ENCODE measurements at regions of chr3 and their contacts with region 1.

Region 1: DNA sequence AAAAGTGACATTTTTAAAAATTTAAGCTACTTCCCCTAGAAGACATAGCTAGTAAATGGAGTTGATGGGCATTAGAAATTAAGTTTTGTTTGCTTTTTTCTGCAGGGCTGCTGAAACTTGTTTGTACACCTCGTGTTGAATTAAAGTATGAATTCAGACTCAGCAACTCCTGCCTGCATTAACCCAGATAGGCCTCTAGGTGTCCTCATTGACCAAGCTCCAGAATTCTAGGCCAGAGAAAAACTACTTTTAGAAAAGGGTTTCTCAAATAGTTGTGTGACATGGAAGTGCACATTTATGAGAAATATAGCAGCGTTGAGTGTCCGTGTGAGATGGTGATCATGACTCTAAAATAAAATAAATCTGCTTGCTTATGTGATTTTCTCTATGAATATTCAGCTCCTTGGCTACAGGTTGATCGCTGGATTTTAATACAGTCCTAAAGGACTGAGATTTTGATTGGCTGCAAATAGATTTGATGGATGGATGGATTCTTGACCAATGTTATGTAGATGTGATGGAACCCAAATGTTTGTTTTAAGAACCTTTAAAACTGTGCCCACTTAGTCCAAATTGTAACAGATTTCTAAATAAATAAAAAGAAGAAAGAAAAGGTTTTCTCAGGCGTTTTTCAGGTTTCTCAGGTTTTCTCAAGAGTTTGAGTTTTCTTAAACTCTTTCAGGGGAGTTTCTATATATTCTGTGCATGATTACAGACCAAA is 39.4 kb upstream of the LMOD3 start:
- DNase-seq: peak in 7 of 9 experiments; percentile 4 to 68 (median 20)
- ATAC-seq: peak; percentile 83
- H3K4me3 ChIP-seq: no peak overlapping the region
- H3K4me3 Mint-ChIP-seq: no peak overlapping the region
- H3K27ac ChIP-seq: no peak overlapping the region
- H3K27ac Mint-ChIP-seq: no peak overlapping the region
- H3K4me1 ChIP-seq: no peaks in the 10 kb centered on the region
- H3K4me1 Mint-ChIP-seq: no peaks in the 10 kb centered on the region
- H3K27me3 ChIP-seq: no peaks in the 10 kb centered on the region
- H3K27me3 Mint-ChIP-seq: peaks cover 5% of the 10 kb centered on the region
- CTCF ChIP-seq: peak; percentile 99

Region 2: GRCh38 chr3:69174871-69175737 is 13.4 kb after region 1 on chr3:
- CTCF ChIA-PET with region 1: interaction called, 18 read pairs
- POLR2A ChIA-PET with region 1: no interaction called
- intact Hi-C with region 1: no loop called
- DNase-seq: no peak
- ATAC-seq: no peak
- H3K4me3 ChIP-seq: no peak overlapping the region
- H3K4me3 Mint-ChIP-seq: no peak overlapping the region
- H3K27ac ChIP-seq: no peak overlapping the region
- H3K27ac Mint-ChIP-seq: no peak overlapping the region
- H3K4me1 ChIP-seq: no peaks in the 10 kb centered on the region
- H3K4me1 Mint-ChIP-seq: peaks cover 5% of the 10 kb centered on the region
- H3K27me3 ChIP-seq: no peaks in the 10 kb centered on the region
- H3K27me3 Mint-ChIP-seq: no peaks in the 10 kb centered on the region
- CTCF ChIP-seq: no peak

Region 3: DNA sequence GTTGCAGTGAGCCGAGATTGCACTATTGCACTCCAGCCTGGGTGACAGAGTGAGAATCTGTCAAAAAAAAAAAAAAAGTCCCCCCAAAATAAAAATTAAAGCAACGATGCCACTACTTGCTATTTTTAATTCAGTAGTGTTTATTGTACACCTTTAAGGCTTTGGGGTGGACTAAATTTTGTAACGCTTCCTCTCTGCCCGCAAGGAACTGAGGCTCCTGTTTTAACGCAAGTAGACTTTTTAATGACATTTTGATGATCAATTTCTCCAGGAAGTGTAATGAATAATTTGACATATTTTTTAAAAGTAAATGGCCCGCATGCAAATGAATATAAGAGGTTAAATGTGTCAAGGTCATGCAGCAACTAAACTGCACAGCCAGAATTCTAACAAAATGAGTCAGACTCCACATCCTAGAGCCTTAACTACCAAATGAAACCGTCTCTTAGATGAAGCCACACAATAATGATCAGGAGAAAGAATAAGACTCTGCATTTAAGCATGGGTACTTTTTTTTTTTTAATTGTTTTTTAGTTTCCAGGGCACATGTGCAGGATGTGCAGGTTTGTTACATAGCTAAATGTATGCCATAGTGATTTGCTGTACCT is 57.5 kb after region 1 on chr3:
- CTCF ChIA-PET with region 1: no interaction called
- POLR2A ChIA-PET with region 1: no interaction called
- intact Hi-C with region 1: no loop called
- DNase-seq: no peak
- ATAC-seq: no peak
- H3K4me3 ChIP-seq: no peak overlapping the region
- H3K4me3 Mint-ChIP-seq: no peak overlapping the region
- H3K27ac ChIP-seq: no peak overlapping the region
- H3K27ac Mint-ChIP-seq: no peak overlapping the region
- H3K4me1 ChIP-seq: no peaks in the 10 kb centered on the region
- H3K4me1 Mint-ChIP-seq: no peaks in the 10 kb centered on the region
- H3K27me3 ChIP-seq: no peaks in the 10 kb centered on the region
- H3K27me3 Mint-ChIP-seq: no peaks in the 10 kb centered on the region
- CTCF ChIP-seq: no peak

Region 4: DNA sequence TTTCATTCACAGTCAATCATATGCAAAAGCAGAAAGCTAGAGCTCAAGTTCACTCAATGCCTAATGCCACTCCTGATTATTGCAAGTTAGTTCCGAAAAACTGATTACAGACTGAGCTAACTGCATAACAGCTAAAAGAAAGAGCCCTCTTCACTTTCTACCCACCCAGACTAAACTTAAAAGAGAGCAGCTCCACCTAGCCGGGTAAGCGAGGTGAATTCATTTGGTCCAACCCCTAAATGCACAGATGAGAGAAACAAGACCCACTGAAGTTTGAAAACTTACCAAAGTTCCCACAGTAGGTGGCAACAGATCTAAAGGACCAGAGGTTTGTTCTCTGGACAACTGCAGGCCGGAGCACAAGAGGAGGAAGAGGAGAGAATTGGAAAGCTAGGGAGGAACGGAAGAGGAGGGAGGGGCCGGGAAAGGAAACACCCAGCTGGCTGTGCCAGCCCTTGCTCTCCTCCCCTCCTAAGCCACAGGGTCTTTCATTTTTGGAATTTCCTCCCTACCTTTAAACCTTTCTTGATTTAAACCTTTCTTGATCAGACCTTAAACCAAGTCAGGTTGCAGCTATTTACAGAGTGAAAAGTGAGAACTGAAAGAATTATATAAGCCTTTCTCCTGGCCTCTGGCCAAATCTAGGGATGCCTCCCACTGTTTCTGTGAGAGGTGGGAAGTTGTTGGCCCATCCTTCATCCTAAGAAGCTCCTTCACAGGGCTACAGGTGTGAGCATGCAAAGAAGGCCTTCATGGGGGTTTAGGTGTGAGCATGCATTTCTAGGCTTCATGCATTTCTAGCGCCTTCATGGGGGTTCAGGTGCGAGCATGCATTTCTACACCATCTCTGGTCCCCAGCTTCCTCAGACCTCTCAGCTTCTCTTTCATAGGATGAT is 75.3 kb after region 1 on chr3:
- CTCF ChIA-PET with region 1: interaction called, 20 read pairs
- POLR2A ChIA-PET with region 1: no interaction called
- intact Hi-C with region 1: loop called in 1 of 2 experiments (anchors 5 kb)
- DNase-seq: peak in 2 of 9 experiments; percentile 6 to 22
- ATAC-seq: peak; percentile 54
- H3K4me3 ChIP-seq: no peak overlapping the region
- H3K4me3 Mint-ChIP-seq: peak overlapping the region; percentile 63
- H3K27ac ChIP-seq: no peak overlapping the region
- H3K27ac Mint-ChIP-seq: no peak overlapping the region
- H3K4me1 ChIP-seq: peaks cover 14% of the 10 kb centered on the region
- H3K4me1 Mint-ChIP-seq: peaks cover 20% of the 10 kb centered on the region
- H3K27me3 ChIP-seq: no peaks in the 10 kb centered on the region
- H3K27me3 Mint-ChIP-seq: no peaks in the 10 kb centered on the region
- CTCF ChIP-seq: no peak

Region 5: DNA sequence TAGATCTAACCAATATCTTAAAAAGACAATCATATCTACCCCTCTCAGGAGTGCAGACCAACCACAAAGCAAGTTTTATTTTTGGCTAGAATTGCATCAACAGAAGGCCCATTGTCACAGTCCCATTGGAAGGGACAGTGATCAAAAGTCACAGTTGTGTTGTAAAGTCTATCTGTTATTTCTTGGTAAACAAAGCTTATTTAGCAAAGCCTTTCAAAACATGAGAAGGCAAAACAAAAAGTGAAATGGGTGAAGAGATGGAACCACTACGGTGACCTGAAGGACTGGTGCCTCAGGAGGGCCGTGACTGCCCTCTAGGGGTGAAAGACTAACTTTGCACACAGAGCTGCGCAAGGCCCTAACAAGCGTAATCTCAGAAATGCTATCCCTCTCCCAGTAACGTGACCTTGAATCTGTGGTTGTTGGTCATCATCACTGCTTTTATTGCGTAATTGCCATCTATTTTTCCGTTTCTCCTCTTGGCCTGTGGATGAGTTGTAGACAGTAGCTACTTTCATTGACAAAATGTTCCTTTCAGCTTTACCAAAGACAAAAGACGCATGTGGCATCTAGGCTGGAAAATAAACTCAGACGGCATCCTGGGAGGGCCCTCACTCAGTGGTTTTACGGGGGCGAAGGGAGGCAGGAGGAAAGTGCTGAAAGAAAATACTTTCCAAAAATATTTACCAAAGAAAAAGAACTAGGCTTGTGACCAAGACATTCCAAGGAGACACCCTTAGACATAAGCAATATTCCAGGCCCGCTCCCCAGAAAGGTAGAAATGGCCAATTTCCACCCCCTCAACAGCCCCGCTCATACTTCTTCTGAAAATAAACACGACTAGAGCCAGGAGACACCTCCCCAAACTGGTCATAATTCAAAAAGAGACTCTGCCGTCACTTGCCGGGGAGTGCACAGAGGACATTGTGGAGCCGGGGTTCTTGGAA is 144.8 kb after region 1 on chr3:
- CTCF ChIA-PET with region 1: interaction called, 316 read pairs
- POLR2A ChIA-PET with region 1: interaction called, 11 read pairs
- intact Hi-C with region 1: loop called (anchors 1 kb)
- DNase-seq: peak in 8 of 9 experiments; percentile 50 to 84 (median 60)
- ATAC-seq: peak; percentile 99
- H3K4me3 ChIP-seq: no peak overlapping the region
- H3K4me3 Mint-ChIP-seq: no peak overlapping the region
- H3K27ac ChIP-seq: no peak overlapping the region
- H3K27ac Mint-ChIP-seq: no peak overlapping the region
- H3K4me1 ChIP-seq: no peaks in the 10 kb centered on the region
- H3K4me1 Mint-ChIP-seq: peaks cover 6% of the 10 kb centered on the region
- H3K27me3 ChIP-seq: no peaks in the 10 kb centered on the region
- H3K27me3 Mint-ChIP-seq: no peaks in the 10 kb centered on the region
- CTCF ChIP-seq: peak; percentile 82

Region 6: DNA sequence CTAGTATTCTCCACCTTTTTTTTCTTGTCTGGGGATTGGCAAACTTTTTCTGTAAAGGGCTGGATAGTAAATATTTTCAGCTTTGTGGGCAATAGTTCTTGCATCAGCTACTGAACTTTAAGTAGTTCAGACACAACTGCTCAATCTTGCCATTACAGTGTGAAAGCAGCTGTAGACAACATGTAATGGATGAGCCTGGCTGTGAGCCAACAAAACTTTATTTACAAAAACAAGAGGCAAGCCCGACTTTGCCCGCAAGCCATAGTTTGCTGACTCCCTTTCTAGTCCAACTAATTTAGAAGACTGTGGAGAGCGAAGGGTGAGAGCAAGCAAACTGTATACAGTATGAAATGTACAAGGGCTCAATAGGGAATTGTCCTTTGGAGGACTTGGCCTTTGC is 217.9 kb after region 1 on chr3:
- CTCF ChIA-PET with region 1: no interaction called
- POLR2A ChIA-PET with region 1: no interaction called
- intact Hi-C with region 1: no loop called
- DNase-seq: no peak
- ATAC-seq: no peak
- H3K4me3 ChIP-seq: no peak overlapping the region
- H3K4me3 Mint-ChIP-seq: no peak overlapping the region
- H3K27ac ChIP-seq: no peak overlapping the region
- H3K27ac Mint-ChIP-seq: no peak overlapping the region
- H3K4me1 ChIP-seq: no peaks in the 10 kb centered on the region
- H3K4me1 Mint-ChIP-seq: no peaks in the 10 kb centered on the region
- H3K27me3 ChIP-seq: peaks cover 0 to 1% of the 10 kb centered on the region in 2 experiments
- H3K27me3 Mint-ChIP-seq: peaks cover 14% of the 10 kb centered on the region
- CTCF ChIP-seq: no peak

Region 7: GRCh38 chr3:69458803-69459365 is 297.1 kb after region 1 on chr3:
- CTCF ChIA-PET with region 1: no interaction called
- POLR2A ChIA-PET with region 1: no interaction called
- intact Hi-C with region 1: no loop called
- DNase-seq: no peak
- ATAC-seq: no peak
- H3K4me3 ChIP-seq: no peak overlapping the region
- H3K4me3 Mint-ChIP-seq: no peak overlapping the region
- H3K27ac ChIP-seq: no peak overlapping the region
- H3K27ac Mint-ChIP-seq: no peak overlapping the region
- H3K4me1 ChIP-seq: no peaks in the 10 kb centered on the region
- H3K4me1 Mint-ChIP-seq: no peaks in the 10 kb centered on the region
- H3K27me3 ChIP-seq: no peaks in the 10 kb centered on the region
- H3K27me3 Mint-ChIP-seq: no peaks in the 10 kb centered on the region
- CTCF ChIP-seq: no peak

Region 8: GRCh38 chr3:69671082-69671952 is 509.6 kb after region 1 on chr3:
- CTCF ChIA-PET with region 1: interaction called, 3 read pairs
- POLR2A ChIA-PET with region 1: no interaction called
- intact Hi-C with region 1: loop called (anchors 5 kb)
- DNase-seq: peak in 1 of 9 experiments; percentile 10
- ATAC-seq: no peak
- H3K4me3 ChIP-seq: no peak overlapping the region
- H3K4me3 Mint-ChIP-seq: no peak overlapping the region
- H3K27ac ChIP-seq: no peak overlapping the region
- H3K27ac Mint-ChIP-seq: no peak overlapping the region
- H3K4me1 ChIP-seq: no peaks in the 10 kb centered on the region
- H3K4me1 Mint-ChIP-seq: no peaks in the 10 kb centered on the region
- H3K27me3 ChIP-seq: no peaks in the 10 kb centered on the region
- H3K27me3 Mint-ChIP-seq: peaks cover 6% of the 10 kb centered on the region
- CTCF ChIP-seq: peak; percentile 28

Region 9: GRCh38 chr3:70358978-70359580 is 1197.3 kb after region 1 on chr3:
- CTCF ChIA-PET with region 1: no interaction called
- POLR2A ChIA-PET with region 1: no interaction called
- intact Hi-C with region 1: loop called in 1 of 2 experiments (anchors 5 kb)
- DNase-seq: no peak
- ATAC-seq: no peak
- H3K4me3 ChIP-seq: no peak overlapping the region
- H3K4me3 Mint-ChIP-seq: no peak overlapping the region
- H3K27ac ChIP-seq: no peak overlapping the region
- H3K27ac Mint-ChIP-seq: no peak overlapping the region
- H3K4me1 ChIP-seq: no peaks in the 10 kb centered on the region
- H3K4me1 Mint-ChIP-seq: no peaks in the 10 kb centered on the region
- H3K27me3 ChIP-seq: no peaks in the 10 kb centered on the region
- H3K27me3 Mint-ChIP-seq: no peaks in the 10 kb centered on the region
- CTCF ChIP-seq: no peak